ENCODE measurements at regions of chr1 and their contacts with region 1.

Region 1: GRCh38 chr1:15788624-15789301 is 18.7 kb downstream of the UQCRHL start:
- DNase-seq: no peak
- ATAC-seq: no peak
- H3K4me3 ChIP-seq: no peak overlapping the region
- H3K27ac ChIP-seq: no peak overlapping the region
- H3K4me1 ChIP-seq: peaks cover 9% of the 10 kb centered on the region
- H3K27me3 ChIP-seq: no peaks in the 10 kb centered on the region
- CTCF ChIP-seq: no peak

Region 2: GRCh38 chr1:15771836-15772515 is 16.8 kb before region 1 on chr1:
- CTCF ChIA-PET with region 1: interaction called, 10 read pairs
- POLR2A ChIA-PET with region 1: interaction called, 4 read pairs
- in situ Hi-C with region 1: no loop called
- intact Hi-C with region 1: no loop called
- DNase-seq: no peak
- ATAC-seq: peak; percentile 33
- H3K4me3 ChIP-seq: no peak overlapping the region
- H3K27ac ChIP-seq: no peak overlapping the region
- H3K4me1 ChIP-seq: no peaks in the 10 kb centered on the region
- H3K27me3 ChIP-seq: no peaks in the 10 kb centered on the region
- CTCF ChIP-seq: no peak